GM12878 (cell line): ENCODE measurements at regions of chr3 and their contacts with region 1.

Region 1: DNA sequence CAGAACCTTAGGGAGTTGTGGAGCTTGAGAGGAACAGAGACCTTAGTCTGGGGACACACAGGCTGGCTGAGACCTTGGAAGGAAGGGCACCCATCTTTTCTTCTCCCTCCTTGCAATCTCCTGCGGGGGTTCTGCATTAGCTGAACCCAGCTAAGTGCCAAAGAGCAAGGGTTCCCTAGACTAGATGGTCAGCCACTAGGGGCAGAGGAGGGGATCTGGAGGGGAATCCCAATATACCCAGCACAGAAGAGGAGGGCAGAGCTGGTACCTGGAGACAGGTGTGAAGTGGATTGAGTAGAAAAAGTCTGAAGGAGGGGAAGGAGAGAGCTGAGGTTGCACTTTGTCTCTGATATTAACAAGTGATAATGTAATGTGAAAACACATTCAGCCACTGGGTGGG is 212.8 kb downstream of the ADAMTS9 start:
- DNase-seq: no peak
- ATAC-seq: no peak
- H3K4me3 ChIP-seq: no peak overlapping the region
- H3K27ac ChIP-seq: no peak overlapping the region
- H3K4me1 ChIP-seq: no peaks in the 10 kb centered on the region
- H3K27me3 ChIP-seq: no peaks in the 10 kb centered on the region
- CTCF ChIP-seq: no peak
- EP300 ChIP-seq: no peak
- POLR2A ChIP-seq: no peak
- RAD21 ChIP-seq: no peak

Region 2: DNA sequence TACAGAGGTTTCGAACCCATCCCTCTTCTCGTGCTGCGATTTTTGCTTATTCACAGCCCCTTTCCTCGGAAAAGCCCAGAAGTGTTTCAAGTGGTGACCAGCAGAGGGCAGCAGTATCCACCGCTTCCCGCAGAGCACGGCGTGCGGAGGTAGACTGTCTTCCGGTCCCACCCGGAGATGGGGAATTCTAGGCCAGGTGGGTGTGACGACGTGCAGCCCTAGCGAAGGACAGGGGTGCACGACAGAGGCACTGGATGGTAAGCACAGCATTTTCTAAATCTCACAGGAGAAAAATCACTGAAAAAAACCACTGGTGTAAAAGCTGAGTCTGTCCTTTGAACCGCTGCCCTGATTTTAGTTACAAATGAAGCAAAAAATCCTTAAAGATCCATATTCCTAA is 444.3 kb before region 1 on chr3:
- CTCF ChIA-PET with region 1: interaction called, 11 read pairs
- POLR2A ChIA-PET with region 1: interaction called, 3 read pairs
- RAD21 ChIA-PET with region 1: no interaction called
- SMC1A ChIA-PET with region 1: interaction called, 3 read pairs
- in situ Hi-C with region 1: loop called (anchors 5 kb)
- intact Hi-C with region 1: no loop called
- DNase-seq: peak; percentile 41
- ATAC-seq: peak; percentile 99
- H3K4me3 ChIP-seq: no peak overlapping the region; the same call in 1 of the 2 replicates
- H3K27ac ChIP-seq: no peak overlapping the region
- H3K4me1 ChIP-seq: no peaks in the 10 kb centered on the region; the same call in 1 of the 2 replicates
- H3K27me3 ChIP-seq: no peaks in the 10 kb centered on the region
- CTCF ChIP-seq: peak; percentile 79 to 97 (median 89); a peak in 5 of 6 replicates
- EP300 ChIP-seq: no peak
- POLR2A ChIP-seq: no peak
- RAD21 ChIP-seq: peak; percentile 97